Panc1 (cell line): ENCODE measurements at regions of chr11 and their contacts with region 1.

Region 1: GRCh38 chr11:61158616-61159381 is 2.4 kb downstream of the VPS37C start:
- DNase-seq: no peak
- ATAC-seq: no peak
- H3K4me3 ChIP-seq: no peak overlapping the region; a peak in 1 of 4 replicates
- H3K27ac ChIP-seq: peak overlapping the region; percentile 67
- H3K4me1 ChIP-seq: peaks cover 30% of the 10 kb centered on the region
- H3K27me3 ChIP-seq: no peaks in the 10 kb centered on the region
- CTCF ChIP-seq: no peak

Region 2: GRCh38 chr11:60938500-60938899 is 220.3 kb before region 1 on chr11:
- CTCF ChIA-PET with region 1: interaction called, 11 read pairs
- POLR2A ChIA-PET with region 1: no interaction called
- in situ Hi-C with region 1: no loop called
- intact Hi-C with region 1: no loop called
- DNase-seq: no peak
- ATAC-seq: no peak
- H3K4me3 ChIP-seq: no peak overlapping the region
- H3K27ac ChIP-seq: no peak overlapping the region
- H3K4me1 ChIP-seq: no peaks in the 10 kb centered on the region
- H3K27me3 ChIP-seq: no peaks in the 10 kb centered on the region
- CTCF ChIP-seq: no peak